Activated CD8-positive, alpha-beta memory T cell treated with anti-CD3 and anti-CD28 coated beads, Interleukin-2, amount 10 ng/mL, durations not matched to agents 7 days and 5 days (primary cell): ENCODE measurements at regions of chr12 and their contacts with region 1.

Region 1: DNA sequence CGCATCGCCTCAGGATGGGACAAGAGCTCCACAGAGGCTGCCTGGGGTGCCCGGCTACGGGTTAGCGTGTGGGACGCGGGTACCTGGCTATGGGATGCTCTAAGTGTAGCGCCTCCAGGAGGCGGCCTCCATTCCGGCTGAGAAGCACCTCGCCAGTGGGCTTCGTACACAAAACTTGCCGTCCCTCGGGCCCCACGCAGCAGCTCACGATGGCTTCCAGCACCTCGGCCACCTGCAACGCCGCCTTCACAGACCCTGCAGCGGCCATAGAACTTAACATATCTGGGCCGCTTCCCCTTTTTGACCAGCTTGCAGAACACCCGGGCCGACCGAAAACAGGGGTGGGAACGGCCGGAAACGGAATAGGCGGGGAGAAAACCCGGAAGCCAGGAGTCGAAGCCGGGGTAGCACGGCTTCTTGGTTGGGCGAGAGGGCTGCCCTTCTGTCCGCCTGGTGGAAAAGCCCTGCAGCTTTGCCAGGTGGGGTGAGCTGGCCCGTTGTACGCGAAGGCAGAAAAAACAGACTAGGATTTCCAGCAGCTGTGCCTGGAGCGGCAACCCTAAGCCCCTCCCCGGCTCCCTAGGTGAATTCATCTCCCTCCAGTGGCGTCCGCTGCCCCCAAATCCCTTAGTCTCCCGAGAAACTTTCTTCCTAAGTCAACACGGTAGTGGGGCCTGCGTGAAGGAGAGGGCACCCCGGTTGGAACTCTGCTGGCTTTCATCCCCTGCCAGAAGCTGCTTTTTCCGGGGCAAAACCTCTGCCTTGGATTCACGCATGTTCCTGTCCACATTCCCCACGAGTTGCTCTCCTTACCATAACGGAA is at the start of gene BBS10:
- DNase-seq: peak; percentile 93
- ATAC-seq: peak; percentile 98
- H3K4me3 Mint-ChIP-seq: peak within 1 kb of the TSS; percentile 94
- H3K27ac Mint-ChIP-seq: peak within 1 kb of the TSS; percentile 85
- H3K4me1 Mint-ChIP-seq: peaks cover 21% of the 10 kb centered on the region
- H3K27me3 Mint-ChIP-seq: no peaks in the 10 kb centered on the region
- total RNA-seq, gene BBS10: 4.3 to 4.6 TPM

Region 2: GRCh38 chr12:76083904-76084862 is 264.1 kb before region 1 on chr12 and contains the start of gene NAP1L1:
- CTCF ChIA-PET with region 1: interaction called, 10 read pairs
- DNase-seq: peak; percentile 99
- ATAC-seq: peak; percentile 78
- H3K4me3 Mint-ChIP-seq: peak within 1 kb of the TSS; percentile 96
- H3K27ac Mint-ChIP-seq: peak within 1 kb of the TSS; percentile 99
- H3K4me1 Mint-ChIP-seq: peaks cover 47% of the 10 kb centered on the region
- H3K27me3 Mint-ChIP-seq: no peaks in the 10 kb centered on the region
- total RNA-seq, gene NAP1L1: 434 to 655 TPM

Region 3: DNA sequence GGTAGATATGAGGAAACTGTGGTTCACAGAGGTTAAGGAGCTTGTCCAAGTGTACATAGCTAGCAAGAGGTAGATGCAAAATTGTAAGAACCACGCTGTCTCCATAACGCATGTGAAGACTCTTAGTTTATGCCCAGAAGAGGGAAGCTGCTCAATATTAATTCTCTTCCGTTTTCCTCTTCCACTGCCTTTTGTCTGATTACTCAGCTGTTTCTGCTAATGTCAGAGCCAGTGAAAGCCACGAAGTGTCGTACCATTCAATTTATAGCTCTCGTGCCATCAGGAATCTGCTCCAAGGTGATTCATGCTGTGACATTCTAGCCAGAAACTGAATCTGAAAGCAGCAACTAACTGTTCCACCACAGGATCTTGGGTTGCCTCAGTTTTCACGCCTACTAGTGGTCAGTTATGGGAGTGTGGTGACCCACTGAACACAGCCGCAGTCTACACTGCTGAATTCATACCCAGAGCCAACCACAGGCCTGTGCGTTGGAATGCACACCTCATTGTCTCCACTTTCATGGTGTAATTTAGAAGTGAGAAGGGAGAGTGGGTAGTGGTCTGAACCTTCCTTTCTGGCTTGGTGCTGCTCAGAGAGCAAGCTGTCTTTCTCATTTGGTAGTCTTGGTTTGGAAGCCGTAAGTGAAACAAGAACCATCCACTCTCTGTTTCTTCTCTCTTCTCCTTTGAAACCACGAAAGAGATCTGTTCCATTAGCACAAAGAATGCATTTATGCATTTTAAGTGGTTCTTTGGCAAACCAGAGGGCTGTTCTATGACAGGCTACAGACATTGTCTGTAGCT is 189.6 kb before region 1 on chr12:
- CTCF ChIA-PET with region 1: interaction called, 10 read pairs
- DNase-seq: peak; percentile 93
- ATAC-seq: peak; percentile 95
- H3K4me3 Mint-ChIP-seq: peak overlapping the region; percentile 56
- H3K27ac Mint-ChIP-seq: peak overlapping the region; percentile 77
- H3K4me1 Mint-ChIP-seq: peaks cover 19% of the 10 kb centered on the region
- H3K27me3 Mint-ChIP-seq: peaks cover 2% of the 10 kb centered on the region

Region 4: GRCh38 chr12:76417116-76417515 is 68.8 kb after region 1 on chr12:
- CTCF ChIA-PET with region 1: no interaction called
- DNase-seq: no peak
- ATAC-seq: peak; percentile 47
- H3K4me3 Mint-ChIP-seq: no peak overlapping the region
- H3K27ac Mint-ChIP-seq: peak overlapping the region; percentile 56
- H3K4me1 Mint-ChIP-seq: peaks cover 21% of the 10 kb centered on the region
- H3K27me3 Mint-ChIP-seq: no peaks in the 10 kb centered on the region

Region 5: GRCh38 chr12:76428117-76428516 is 79.8 kb after region 1 on chr12:
- CTCF ChIA-PET with region 1: no interaction called
- DNase-seq: no peak
- ATAC-seq: no peak
- H3K4me3 Mint-ChIP-seq: no peak overlapping the region
- H3K27ac Mint-ChIP-seq: no peak overlapping the region
- H3K4me1 Mint-ChIP-seq: peaks cover 2% of the 10 kb centered on the region
- H3K27me3 Mint-ChIP-seq: no peaks in the 10 kb centered on the region

Region 6: DNA sequence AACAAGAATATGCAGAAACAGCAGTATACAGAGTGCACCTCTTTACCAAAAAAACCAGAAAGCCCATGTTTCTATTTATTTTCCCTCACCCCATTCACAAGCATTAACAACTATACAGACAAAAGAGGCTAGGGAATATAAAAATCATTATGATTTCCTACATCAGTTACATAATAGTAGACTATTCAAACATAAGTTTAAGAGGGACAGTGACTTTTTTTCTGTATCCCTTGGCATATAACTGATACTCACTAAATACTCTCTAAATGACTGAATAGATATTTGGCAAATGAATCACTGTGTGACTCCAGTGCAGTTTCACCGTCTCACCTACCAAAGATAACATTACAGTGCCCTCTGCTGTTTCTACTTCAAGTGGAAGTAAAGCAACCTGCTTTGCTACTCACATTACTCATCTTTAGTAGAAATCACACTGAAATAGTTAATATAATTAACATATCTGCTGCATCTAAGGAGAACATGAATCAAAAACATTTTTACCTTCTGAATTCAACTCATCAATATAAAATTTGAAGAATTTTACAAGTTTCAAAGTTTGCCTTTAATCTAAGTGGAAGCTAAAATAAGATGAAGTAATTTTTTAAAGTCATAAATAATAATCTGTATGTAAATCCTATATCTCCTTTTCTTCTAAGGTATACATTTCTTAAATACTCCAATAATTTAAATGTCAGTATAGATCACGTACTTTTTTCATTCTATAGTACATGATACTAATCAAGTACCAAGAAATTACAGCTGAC is 107.5 kb after region 1 on chr12:
- CTCF ChIA-PET with region 1: interaction called, 15 read pairs
- DNase-seq: peak; percentile 42
- ATAC-seq: peak; percentile 84
- H3K4me3 Mint-ChIP-seq: no peak overlapping the region
- H3K27ac Mint-ChIP-seq: no peak overlapping the region
- H3K4me1 Mint-ChIP-seq: peaks cover 9% of the 10 kb centered on the region
- H3K27me3 Mint-ChIP-seq: no peaks in the 10 kb centered on the region